ENCODE measurements at regions of chr17 and their contacts with region 1.

Region 1: GRCh38 chr17:27601069-27601975 is 29.7 kb upstream of the LGALS9 start:
- DNase-seq: peak; percentile 71 to 82
- ATAC-seq: peak; percentile 31 to 70 (median 55)
- H3K4me3 ChIP-seq: no peak overlapping the region
- H3K27ac ChIP-seq: no peak overlapping the region
- H3K4me1 ChIP-seq: peaks cover 0 to 27% (median 9%) of the 10 kb centered on the region in 9 donors
- H3K27me3 ChIP-seq: no peaks in the 10 kb centered on the region
- CTCF ChIP-seq: peak; percentile 92 to 96 (median 95)

Region 2: GRCh38 chr17:27245230-27245696 is 356.1 kb before region 1 on chr17:
- intact Hi-C with region 1: loop called in 2 of 10 experiments (anchors 2 kb)
- DNase-seq: peak; percentile 87 to 89
- ATAC-seq: peak; percentile 91 to 97 (median 94)
- H3K4me3 ChIP-seq: peak overlapping the region in 6 of 10 donors; percentile 7 to 30 (median 22)
- H3K27ac ChIP-seq: peak overlapping the region; percentile 77 to 94 (median 84)
- H3K4me1 ChIP-seq: peaks cover 12 to 75% (median 46%) of the 10 kb centered on the region in 9 donors
- H3K27me3 ChIP-seq: no peaks in the 10 kb centered on the region
- CTCF ChIP-seq: peak; percentile 43 to 93 (median 81)

Region 3: DNA sequence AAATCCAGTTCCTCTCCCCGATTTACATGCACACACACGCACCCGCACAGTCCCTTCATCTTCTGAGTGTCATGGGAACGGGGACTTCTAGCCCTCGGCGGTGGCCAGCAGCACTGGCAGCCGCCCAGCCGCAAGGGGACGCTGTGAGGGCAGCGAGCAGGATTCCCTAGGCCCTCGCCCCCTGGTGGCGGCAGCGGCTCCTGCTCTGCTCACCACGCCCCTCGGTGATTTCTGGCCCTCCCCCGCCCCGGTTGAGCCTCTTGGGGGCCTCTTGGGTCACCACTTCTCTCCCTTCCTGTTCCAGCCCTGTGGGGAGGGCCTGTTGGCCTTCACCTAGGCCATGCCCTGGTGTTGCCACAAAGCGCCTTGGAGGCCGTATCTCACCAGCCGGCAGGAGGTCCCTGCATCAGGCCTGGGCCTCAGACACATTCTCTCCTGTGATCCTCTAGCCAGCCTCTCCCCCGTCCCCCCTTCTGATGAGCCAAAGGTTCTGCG is 220.3 kb before region 1 on chr17:
- intact Hi-C with region 1: loop called in 1 of 10 experiments (anchors 10 kb)
- DNase-seq: peak; percentile 70 to 81
- ATAC-seq: peak; percentile 40 to 84 (median 70)
- H3K4me3 ChIP-seq: peak overlapping the region in 1 of 10 donors; percentile 43
- H3K27ac ChIP-seq: peak overlapping the region in 1 of 10 donors; percentile 40
- H3K4me1 ChIP-seq: peaks cover 3 to 34% (median 28%) of the 10 kb centered on the region in 9 donors
- H3K27me3 ChIP-seq: no peaks in the 10 kb centered on the region
- CTCF ChIP-seq: peak; percentile 73 to 98 (median 88)

Region 4: DNA sequence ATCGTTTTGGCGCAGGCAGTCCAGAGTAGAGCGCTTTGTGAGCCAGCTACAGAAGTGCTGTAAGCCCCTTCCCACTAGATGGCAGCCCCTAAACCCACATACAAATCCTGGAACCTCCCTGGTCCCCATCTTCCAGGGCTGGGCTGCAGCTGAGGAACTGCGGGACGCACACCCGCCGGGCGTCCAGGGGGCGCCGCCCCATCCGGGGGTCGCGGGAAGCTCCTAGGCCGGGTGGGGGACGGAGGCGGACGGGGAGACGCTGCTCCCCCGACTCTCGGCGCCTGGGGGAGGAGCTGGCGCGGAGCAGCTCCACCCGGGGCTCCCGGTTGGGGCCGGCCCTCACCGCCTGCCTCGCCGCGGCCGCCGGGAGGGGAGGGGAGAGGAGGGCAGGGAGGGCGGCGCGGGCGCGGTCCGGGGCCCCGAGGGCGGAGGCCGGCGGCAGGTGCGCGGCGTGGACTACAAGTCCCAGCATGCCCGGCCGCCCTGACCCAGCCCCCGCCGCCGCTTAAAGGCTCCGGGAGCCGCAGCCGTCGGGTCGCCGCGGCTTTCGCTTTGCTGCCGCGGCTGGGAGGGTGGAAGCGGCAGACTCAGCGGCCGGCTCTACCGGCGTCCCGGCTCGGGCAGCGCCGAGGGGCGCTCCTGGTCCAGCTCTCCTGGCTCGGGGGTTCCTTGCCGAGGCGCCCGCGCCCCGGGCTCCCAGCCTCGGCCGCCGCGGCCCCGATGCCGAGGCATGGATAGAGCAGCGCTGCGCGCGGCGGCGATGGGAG is 145.2 kb before region 1 on chr17 and contains the start of gene KSR1:
- intact Hi-C with region 1: loop called in 8 of 10 experiments (anchors 1 to 5 kb)
- DNase-seq: peak; percentile 72 to 82
- ATAC-seq: peak; percentile 86 to 97 (median 93)
- H3K4me3 ChIP-seq: peak within 1 kb of the TSS; percentile 45 to 91 (median 88)
- H3K27ac ChIP-seq: peak within 1 kb of the TSS; percentile 32 to 88 (median 80)
- H3K4me1 ChIP-seq: peaks cover 8 to 35% (median 23%) of the 10 kb centered on the region in 9 donors
- H3K27me3 ChIP-seq: no peaks in the 10 kb centered on the region
- CTCF ChIP-seq: peak in 8 of 9 donors; percentile 22 to 74 (median 53)
- total RNA-seq, gene KSR1: 5.6 to 19.6 (median 8.6) TPM

Region 5: DNA sequence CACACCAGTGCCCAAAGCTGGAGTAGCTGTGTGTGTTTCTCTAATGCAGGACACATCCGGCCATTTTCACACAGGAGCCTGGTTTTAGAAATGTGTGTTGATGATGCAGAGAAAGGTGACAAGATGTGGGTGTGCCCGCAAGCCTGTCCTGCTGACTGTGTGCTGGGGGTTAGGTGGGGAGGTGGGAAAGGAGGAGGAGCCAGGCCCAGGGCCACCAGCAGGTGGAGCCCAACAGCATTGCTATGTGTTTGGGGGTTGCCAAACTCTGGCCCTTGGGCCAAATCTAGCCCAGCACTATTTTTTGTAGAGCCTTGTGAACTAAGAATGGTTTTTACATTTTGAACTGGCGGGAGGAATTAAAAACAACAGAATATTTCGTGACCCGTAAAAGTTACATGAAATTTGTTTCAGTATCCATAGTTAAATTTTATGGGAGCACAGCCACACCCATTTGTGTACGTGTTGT is 32.0 kb before region 1 on chr17:
- intact Hi-C with region 1: loop called in 1 of 10 experiments (anchors 5 kb)
- DNase-seq: no peak
- ATAC-seq: peak in 5 of 8 donors; percentile 25 to 44 (median 32)
- H3K4me3 ChIP-seq: no peak overlapping the region
- H3K27ac ChIP-seq: peak overlapping the region in 1 of 10 donors; percentile 49
- H3K4me1 ChIP-seq: peaks cover 4 to 86% (median 56%) of the 10 kb centered on the region in 9 donors
- H3K27me3 ChIP-seq: no peaks in the 10 kb centered on the region
- CTCF ChIP-seq: peak in 7 of 9 donors; percentile 46 to 67 (median 56)

Region 6: DNA sequence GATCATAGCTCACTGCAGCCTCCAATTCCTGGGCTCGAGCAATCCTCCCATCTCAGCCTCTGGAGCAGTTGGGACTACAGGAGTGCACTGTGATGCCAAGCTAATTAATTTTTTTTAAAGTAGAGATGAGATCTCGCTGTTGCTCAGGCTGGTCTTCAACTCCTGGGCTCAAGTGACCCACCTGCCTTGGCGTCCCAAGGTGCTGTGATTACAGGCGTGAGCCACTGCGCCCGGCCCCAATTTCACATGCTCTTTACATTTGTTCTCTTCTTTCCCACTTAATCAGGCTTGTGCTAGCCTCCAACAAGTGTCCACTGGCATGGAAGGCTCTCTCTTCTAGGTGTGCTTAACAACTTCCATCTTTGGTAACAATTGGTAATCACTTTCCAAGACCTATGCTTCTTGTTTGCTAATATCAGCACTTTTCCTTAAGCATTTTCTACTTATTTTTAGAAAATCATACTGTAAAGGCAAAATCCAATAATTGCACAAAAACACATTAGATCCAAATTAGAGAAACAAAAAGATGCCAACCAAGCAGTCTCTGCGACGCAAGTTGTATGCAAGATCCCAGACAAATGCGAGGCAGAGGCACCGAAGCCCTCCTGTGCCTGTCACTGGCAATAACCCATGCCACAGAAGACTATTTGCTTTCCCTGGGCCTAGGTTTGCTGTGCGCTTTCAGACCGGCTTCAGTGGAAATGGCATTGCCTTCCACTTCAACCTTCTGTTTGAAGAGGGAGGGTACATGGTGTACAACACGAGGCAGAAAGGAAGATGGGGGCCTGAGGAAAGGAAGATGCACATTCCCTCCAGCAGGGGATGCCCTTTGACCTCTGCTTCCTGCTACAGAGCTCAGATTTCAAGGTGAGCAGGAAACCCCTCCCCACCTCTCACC is 146.4 kb after region 1 on chr17:
- intact Hi-C with region 1: loop called in 2 of 10 experiments (anchors 5 to 10 kb)
- DNase-seq: no peak
- ATAC-seq: no peak
- H3K4me3 ChIP-seq: no peak overlapping the region
- H3K27ac ChIP-seq: peak overlapping the region in 1 of 10 donors; percentile 85
- H3K4me1 ChIP-seq: peaks cover 0 to 17% (median 0%) of the 10 kb centered on the region in 9 donors
- H3K27me3 ChIP-seq: no peaks in the 10 kb centered on the region
- CTCF ChIP-seq: peak in 2 of 9 donors; percentile 4 to 11

Region 7: GRCh38 chr17:27879987-27880608 is 278.8 kb after region 1 on chr17:
- intact Hi-C with region 1: loop called in 1 of 10 experiments (anchors 10 kb)
- DNase-seq: peak; percentile 71 to 80
- ATAC-seq: peak; percentile 86 to 95 (median 92)
- H3K4me3 ChIP-seq: no peak overlapping the region
- H3K27ac ChIP-seq: no peak overlapping the region
- H3K4me1 ChIP-seq: peaks cover 0 to 21% (median 4%) of the 10 kb centered on the region in 9 donors
- H3K27me3 ChIP-seq: no peaks in the 10 kb centered on the region
- CTCF ChIP-seq: peak; percentile 67 to 91 (median 87)